ENCODE measurements at regions of chr18 and their contacts with region 1.

Region 1: GRCh38 chr18:42028247-42028832 is 73.3 kb downstream of the PIK3C3 start:
- DNase-seq: no peak
- H3K4me3 ChIP-seq: no peak overlapping the region
- H3K27ac ChIP-seq: no peak overlapping the region
- H3K27me3 ChIP-seq: no peaks in the 10 kb centered on the region
- CTCF ChIP-seq: peak; percentile 93

Region 2: DNA sequence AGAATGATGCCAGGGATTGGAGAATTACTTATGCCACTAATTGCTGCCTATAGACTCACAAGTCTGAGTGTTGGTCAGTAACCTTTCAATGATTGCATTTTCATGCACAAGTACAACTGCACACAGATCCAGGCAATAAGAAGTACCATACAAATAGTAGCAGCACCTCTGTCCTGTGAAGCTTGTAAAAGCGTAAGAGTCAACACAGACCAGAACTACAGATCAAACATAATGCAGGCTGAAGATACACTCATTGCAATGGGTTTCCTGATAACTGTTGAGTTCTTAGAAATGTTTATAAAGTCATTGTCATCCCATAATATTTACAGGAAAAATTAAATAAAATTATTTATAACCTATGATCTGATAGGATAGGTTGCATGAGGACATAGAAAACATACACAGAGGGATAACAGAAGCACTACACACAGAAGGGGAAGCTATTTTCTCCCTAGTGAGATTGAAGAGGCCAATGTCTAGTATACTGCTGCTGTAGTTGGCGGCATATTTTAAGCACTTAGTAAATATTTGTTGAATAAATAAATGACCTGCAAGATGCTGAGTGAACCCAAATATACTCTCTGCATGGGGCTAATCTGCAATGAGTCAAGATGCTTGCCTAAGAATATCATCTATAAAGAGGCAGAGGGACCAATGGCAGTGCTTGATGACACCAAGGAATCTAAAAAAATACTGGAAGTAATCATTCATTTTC is 79.0 kb before region 1 on chr18:
- CTCF ChIA-PET with region 1: interaction called, 12 read pairs
- POLR2A ChIA-PET with region 1: no interaction called
- DNase-seq: no peak
- H3K4me3 ChIP-seq: no peak overlapping the region
- H3K27ac ChIP-seq: no peak overlapping the region
- H3K27me3 ChIP-seq: no peaks in the 10 kb centered on the region
- CTCF ChIP-seq: no peak

Region 3: GRCh38 chr18:41982942-41983660 is 45.2 kb before region 1 on chr18:
- CTCF ChIA-PET with region 1: interaction called, 23 read pairs
- POLR2A ChIA-PET with region 1: no interaction called
- DNase-seq: no peak
- H3K4me3 ChIP-seq: no peak overlapping the region
- H3K27ac ChIP-seq: no peak overlapping the region
- H3K27me3 ChIP-seq: no peaks in the 10 kb centered on the region
- CTCF ChIP-seq: no peak

Region 4: DNA sequence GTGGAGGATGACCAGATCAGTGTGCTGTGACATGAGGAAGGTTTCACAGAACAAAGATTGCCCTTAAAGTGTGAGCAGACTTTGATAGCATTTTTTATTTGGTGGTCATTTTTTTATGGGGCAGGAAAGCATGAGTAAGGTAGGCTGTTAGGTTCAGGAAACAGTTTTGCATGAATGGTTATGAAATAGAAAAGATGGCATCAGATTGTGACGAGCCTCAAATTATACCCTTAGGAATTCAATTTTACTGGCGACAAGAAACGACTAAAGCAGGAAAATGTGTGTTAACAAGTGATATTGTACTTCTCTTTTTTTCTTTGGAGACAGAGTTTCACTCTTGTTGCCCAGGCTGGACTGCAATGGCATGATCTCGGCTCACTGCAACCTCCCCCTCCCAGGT is 28.6 kb before region 1 on chr18:
- CTCF ChIA-PET with region 1: interaction called, 24 read pairs
- POLR2A ChIA-PET with region 1: no interaction called
- DNase-seq: no peak
- H3K4me3 ChIP-seq: no peak overlapping the region
- H3K27ac ChIP-seq: no peak overlapping the region
- H3K27me3 ChIP-seq: no peaks in the 10 kb centered on the region
- CTCF ChIP-seq: no peak

Region 5: GRCh38 chr18:42038936-42039335 is 10.6 kb after region 1 on chr18:
- CTCF ChIA-PET with region 1: interaction called, 129 read pairs
- POLR2A ChIA-PET with region 1: no interaction called
- DNase-seq: peak; percentile 86
- H3K4me3 ChIP-seq: no peak overlapping the region
- H3K27ac ChIP-seq: no peak overlapping the region
- H3K27me3 ChIP-seq: no peaks in the 10 kb centered on the region
- CTCF ChIP-seq: no peak